Gastrocnemius medialis (tissue), 4 donors: ENCODE measurements at regions of chr19 and their contacts with region 1.

Region 1: DNA sequence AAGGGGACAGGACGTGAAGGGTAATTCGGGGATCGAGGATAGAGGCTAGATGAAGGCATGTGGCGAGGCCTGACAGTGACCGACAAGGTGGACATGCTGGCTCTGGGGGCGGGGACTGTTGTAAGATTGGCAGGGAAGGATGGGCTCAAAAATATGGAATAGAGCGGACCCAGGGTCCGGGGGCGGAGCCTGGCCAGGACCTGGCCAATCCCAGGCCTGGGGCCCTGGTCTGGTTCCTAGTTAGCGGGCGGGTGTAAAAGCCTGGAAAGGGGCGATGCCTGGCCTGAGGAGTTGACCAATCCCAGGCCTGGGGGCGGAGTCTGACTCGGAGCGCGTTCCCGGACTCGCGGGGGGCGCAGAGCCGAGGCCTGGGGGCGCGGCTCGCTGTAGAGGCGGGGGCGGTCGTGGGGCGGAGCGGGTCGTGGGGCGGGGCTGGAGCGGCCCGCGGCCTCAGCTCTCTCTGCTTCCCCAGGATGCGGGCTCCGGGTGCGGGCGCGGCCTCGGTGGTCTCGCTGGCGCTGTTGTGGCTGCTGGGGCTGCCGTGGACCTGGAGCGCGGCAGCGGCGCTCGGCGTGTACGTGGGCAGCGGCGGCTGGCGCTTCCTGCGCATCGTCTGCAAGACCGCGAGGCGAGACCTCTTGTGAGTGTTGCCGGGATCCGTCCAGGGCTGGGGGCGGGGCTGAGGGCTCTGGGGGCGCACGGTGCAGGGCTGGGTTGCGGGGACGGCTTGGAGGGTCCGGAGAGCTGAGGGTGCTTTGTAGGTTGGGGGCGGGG is at the start of gene SLC27A1:
- DNase-seq: peak; percentile 98 to 99
- ATAC-seq: peak; percentile 68 to 70
- H3K4me3 ChIP-seq: peak within 1 kb of the TSS; percentile 74 to 91 (median 80)
- H3K27ac ChIP-seq: peak within 1 kb of the TSS; percentile 92 to 100 (median 96)
- H3K4me1 ChIP-seq: peaks cover 19 to 41% of the 10 kb centered on the region in 2 donors
- H3K27me3 ChIP-seq: no peaks in the 10 kb centered on the region
- CTCF ChIP-seq: peak in 1 of 5 experiments; percentile 6
- POLR2A ChIP-seq: peak; percentile 44 to 63
- total RNA-seq, gene SLC27A1: 20.7 to 53.8 (median 43.7) TPM

Region 2: DNA sequence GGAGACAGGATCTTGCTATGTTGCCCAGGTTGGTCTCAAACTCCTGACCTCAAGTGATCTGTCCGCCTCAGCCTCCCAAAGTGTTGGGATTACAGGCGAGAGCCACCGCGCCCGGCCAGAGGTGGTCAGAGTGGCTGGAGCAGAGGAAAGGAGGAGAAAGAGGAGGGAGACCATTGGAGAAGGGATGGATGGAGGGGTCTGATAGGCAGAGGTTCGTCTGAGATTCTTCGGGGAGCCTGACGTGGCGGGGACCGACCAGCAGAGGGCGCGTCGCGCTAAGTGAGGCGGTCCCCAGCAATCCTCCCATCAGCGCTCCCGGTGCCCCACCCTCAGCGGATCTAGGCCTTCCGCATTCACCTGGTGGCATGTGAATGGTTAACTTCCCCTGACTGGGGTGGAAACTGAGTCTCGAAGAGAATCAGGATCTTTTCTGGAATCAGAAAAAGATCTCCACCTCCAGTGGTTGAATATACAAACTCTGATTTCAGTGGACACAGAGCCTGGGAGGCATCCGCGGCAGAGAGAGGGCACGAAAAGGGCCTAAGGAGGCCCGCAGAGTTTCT is 124.1 kb before region 1 on chr19:
- in situ Hi-C with region 1: loop called in 1 of 4 experiments (anchors 10 kb)
- intact Hi-C with region 1: loop called (anchors 1 kb)
- DNase-seq: peak in 1 of 2 donors; percentile 59
- ATAC-seq: peak; percentile 78 to 81
- H3K4me3 ChIP-seq: no peak overlapping the region
- H3K27ac ChIP-seq: peak overlapping the region; percentile 54 to 75 (median 69)
- H3K4me1 ChIP-seq: peaks cover 30 to 33% of the 10 kb centered on the region in 2 donors
- H3K27me3 ChIP-seq: no peaks in the 10 kb centered on the region
- CTCF ChIP-seq: peak; percentile 93 to 98 (median 97)
- POLR2A ChIP-seq: no peak

Region 3: GRCh38 chr19:17390665-17391370 is 79.4 kb before region 1 on chr19:
- in situ Hi-C with region 1: loop called in 1 of 4 experiments (anchors 10 kb)
- intact Hi-C with region 1: no loop called
- DNase-seq: peak; percentile 60 to 63
- ATAC-seq: peak; percentile 66 to 75
- H3K4me3 ChIP-seq: peak overlapping the region; percentile 41 to 56 (median 52)
- H3K27ac ChIP-seq: peak overlapping the region in 1 of 4 donors; percentile 23
- H3K4me1 ChIP-seq: peaks cover 6% of the 10 kb centered on the region in 2 donors
- H3K27me3 ChIP-seq: peaks cover 22 to 29% (median 29%) of the 10 kb centered on the region in 3 donors
- CTCF ChIP-seq: peak; percentile 29 to 76 (median 62)
- POLR2A ChIP-seq: no peak

Region 4: GRCh38 chr19:17448131-17448967 is 21.9 kb before region 1 on chr19 and contains the start of gene TMEM221:
- in situ Hi-C with region 1: no loop called
- intact Hi-C with region 1: loop called (anchors 1 kb)
- DNase-seq: peak in 1 of 2 donors; percentile 24
- ATAC-seq: no peak
- H3K4me3 ChIP-seq: peak within 1 kb of the TSS; percentile 35 to 54 (median 43)
- H3K27ac ChIP-seq: no peak within 1 kb of the TSS
- H3K4me1 ChIP-seq: peaks cover 5 to 7% of the 10 kb centered on the region in 2 donors
- H3K27me3 ChIP-seq: peaks cover 12 to 40% (median 15%) of the 10 kb centered on the region in 3 donors
- CTCF ChIP-seq: peak in 2 of 5 experiments; percentile 30 to 47
- POLR2A ChIP-seq: no peak
- total RNA-seq, gene TMEM221: not detected

Region 5: DNA sequence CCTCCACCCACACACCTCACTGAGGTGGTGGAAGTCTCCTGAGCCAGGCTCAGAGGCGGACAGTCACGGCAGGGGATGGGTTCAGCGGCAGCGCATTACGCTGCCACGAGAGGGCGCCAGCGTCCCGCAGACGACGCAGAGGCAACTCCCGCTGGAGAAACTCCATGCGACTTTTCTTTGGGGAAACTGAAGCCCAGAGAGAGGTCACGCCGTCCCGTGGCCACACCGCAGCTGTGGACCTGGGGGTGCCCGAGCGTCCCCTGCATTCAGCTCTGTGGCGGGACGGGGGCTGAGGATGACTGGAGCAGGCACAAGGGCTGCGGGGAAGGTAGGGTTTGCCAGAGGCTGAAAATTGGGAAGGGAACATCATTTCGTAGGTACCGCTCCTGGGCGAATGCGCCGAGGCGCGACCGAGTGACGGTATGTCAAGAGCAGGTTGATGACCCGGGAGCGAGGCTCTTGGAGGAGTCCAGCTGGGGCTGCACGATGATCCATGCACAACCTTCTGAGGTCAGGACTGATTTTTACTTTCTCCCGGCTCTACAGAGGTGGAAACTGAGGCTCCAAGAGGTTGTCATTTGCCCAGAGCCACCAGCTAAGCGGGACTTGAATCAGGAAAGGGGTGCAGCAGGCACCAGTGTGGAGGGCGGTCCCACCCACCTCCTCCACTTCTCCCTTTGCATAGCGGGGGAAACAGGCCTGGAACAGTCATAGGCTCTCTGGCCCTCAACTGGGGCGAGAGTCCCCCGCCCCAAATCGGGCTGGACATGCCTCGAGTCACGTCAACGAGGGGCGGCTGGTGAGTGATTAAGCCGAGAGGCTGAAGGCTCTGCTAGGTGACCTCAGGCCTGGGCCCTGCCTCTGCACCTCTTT is 537.0 kb after region 1 on chr19:
- in situ Hi-C with region 1: no loop called
- intact Hi-C with region 1: loop called (anchors 2 kb)
- DNase-seq: peak; percentile 81 to 84
- ATAC-seq: peak; percentile 61 to 74
- H3K4me3 ChIP-seq: peak overlapping the region; percentile 74 to 99 (median 83)
- H3K27ac ChIP-seq: peak overlapping the region; percentile 89 to 100 (median 95)
- H3K4me1 ChIP-seq: peaks cover under 1 to 12% of the 10 kb centered on the region in 2 donors
- H3K27me3 ChIP-seq: peaks cover 0 to 2% (median 0%) of the 10 kb centered on the region in 3 donors
- CTCF ChIP-seq: peak; percentile 97 to 100 (median 99)
- POLR2A ChIP-seq: peak; percentile 76 to 90